ENCODE measurements at regions of chr12 and their contacts with region 1.

Region 1: GRCh38 chr12:88035271-88035906 is 6.2 kb upstream of the C12orf50 start:
- DNase-seq: peak; percentile 84
- ATAC-seq: peak; percentile 98
- H3K4me3 Mint-ChIP-seq: peak overlapping the region; percentile 97
- H3K27ac Mint-ChIP-seq: peak overlapping the region; percentile 93
- H3K4me1 Mint-ChIP-seq: peaks cover 31% of the 10 kb centered on the region
- H3K27me3 Mint-ChIP-seq: no peaks in the 10 kb centered on the region
- CTCF ChIP-seq: no peak

Region 2: GRCh38 chr12:87848248-87848868 is 187.0 kb before region 1 on chr12:
- CTCF ChIA-PET with region 1: no interaction called
- POLR2A ChIA-PET with region 1: no interaction called
- intact Hi-C with region 1: no loop called
- DNase-seq: no peak
- ATAC-seq: peak; percentile 40
- H3K4me3 Mint-ChIP-seq: no peak overlapping the region
- H3K27ac Mint-ChIP-seq: no peak overlapping the region
- H3K4me1 Mint-ChIP-seq: peaks cover 1% of the 10 kb centered on the region
- H3K27me3 Mint-ChIP-seq: peaks cover 2% of the 10 kb centered on the region
- CTCF ChIP-seq: peak; percentile 91

Region 3: GRCh38 chr12:88063375-88063774 is 28.0 kb after region 1 on chr12:
- CTCF ChIA-PET with region 1: no interaction called
- POLR2A ChIA-PET with region 1: no interaction called
- intact Hi-C with region 1: loop called (anchors 2 kb)
- DNase-seq: no peak
- ATAC-seq: no peak
- H3K4me3 Mint-ChIP-seq: no peak overlapping the region
- H3K27ac Mint-ChIP-seq: no peak overlapping the region
- H3K4me1 Mint-ChIP-seq: peaks cover 15% of the 10 kb centered on the region
- H3K27me3 Mint-ChIP-seq: no peaks in the 10 kb centered on the region
- CTCF ChIP-seq: no peak

Region 4: GRCh38 chr12:88141770-88142609 is 106.6 kb after region 1 on chr12 and contains the starts of genes CEP290 and TMTC3:
- CTCF ChIA-PET with region 1: no interaction called
- POLR2A ChIA-PET with region 1: interaction called, 8 read pairs
- intact Hi-C with region 1: loop called (anchors 1 kb)
- DNase-seq: peak; percentile 81
- ATAC-seq: peak; percentile 94
- H3K4me3 Mint-ChIP-seq: peak within 1 kb of the TSS; percentile 98
- H3K27ac Mint-ChIP-seq: peak within 1 kb of the TSS; percentile 96
- H3K4me1 Mint-ChIP-seq: peaks cover 30% of the 10 kb centered on the region
- H3K27me3 Mint-ChIP-seq: no peaks in the 10 kb centered on the region
- CTCF ChIP-seq: no peak
- total RNA-seq, gene CEP290: 13.7 and 15.0 TPM in 2 replicates
- total RNA-seq, gene TMTC3: 6.3 and 7.4 TPM in 2 replicates

Region 5: DNA sequence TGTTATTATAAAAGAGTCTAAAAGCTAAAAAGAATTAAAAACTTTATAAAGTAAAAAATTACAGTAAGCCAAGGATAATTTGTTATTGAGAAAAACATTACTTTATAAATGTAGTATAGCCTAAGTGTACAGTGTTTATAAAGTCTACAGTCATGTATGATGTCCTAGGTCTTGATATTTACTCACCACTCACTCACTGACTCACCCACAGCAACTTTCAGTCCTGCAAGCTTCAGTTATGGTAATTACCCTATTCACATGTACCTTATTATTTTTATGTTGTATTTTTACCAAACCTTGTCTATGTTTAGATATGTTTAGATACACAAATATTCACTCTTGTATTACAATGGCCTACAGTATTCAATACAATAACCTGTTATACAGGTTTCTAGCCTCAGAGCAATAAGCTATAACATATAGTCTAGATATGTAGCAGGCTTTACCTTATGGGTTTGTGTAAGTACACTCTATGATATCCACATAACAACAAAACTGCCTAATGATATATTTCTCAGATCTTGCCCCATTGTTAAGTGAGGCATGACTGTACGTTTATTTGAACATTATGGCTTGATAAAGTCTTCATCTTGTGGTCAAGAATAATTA is 658.6 kb after region 1 on chr12:
- CTCF ChIA-PET with region 1: no interaction called
- POLR2A ChIA-PET with region 1: no interaction called
- intact Hi-C with region 1: no loop called
- DNase-seq: no peak
- ATAC-seq: no peak
- H3K4me3 Mint-ChIP-seq: no peak overlapping the region
- H3K27ac Mint-ChIP-seq: no peak overlapping the region
- H3K4me1 Mint-ChIP-seq: no peaks in the 10 kb centered on the region
- H3K27me3 Mint-ChIP-seq: no peaks in the 10 kb centered on the region
- CTCF ChIP-seq: no peak

Region 6: GRCh38 chr12:89162704-89163261 is 1127.4 kb after region 1 on chr12:
- CTCF ChIA-PET with region 1: no interaction called
- POLR2A ChIA-PET with region 1: no interaction called
- intact Hi-C with region 1: loop called (anchors 10 kb)
- DNase-seq: no peak
- ATAC-seq: peak; percentile 56
- H3K4me3 Mint-ChIP-seq: no peak overlapping the region
- H3K27ac Mint-ChIP-seq: no peak overlapping the region
- H3K4me1 Mint-ChIP-seq: peaks cover 28% of the 10 kb centered on the region
- H3K27me3 Mint-ChIP-seq: no peaks in the 10 kb centered on the region
- CTCF ChIP-seq: no peak